Activated CD4-positive, alpha-beta memory T cell treated with anti-CD3 and anti-CD28 coated beads, Interleukin-2, amount 10 ng/mL, durations not matched to agents 7 days and 5 days (primary cell): ENCODE measurements at regions of chr10 and their contacts with region 1.

Region 1: GRCh38 chr10:8325024-8325980 is 270.8 kb downstream of the GATA3 start:
- DNase-seq: peak; percentile 35
- H3K4me3 Mint-ChIP-seq: peak overlapping the region; percentile 10
- H3K27ac Mint-ChIP-seq: peak overlapping the region; percentile 82
- H3K4me1 Mint-ChIP-seq: peaks cover 70% of the 10 kb centered on the region
- H3K27me3 Mint-ChIP-seq: no peaks in the 10 kb centered on the region

Region 2: DNA sequence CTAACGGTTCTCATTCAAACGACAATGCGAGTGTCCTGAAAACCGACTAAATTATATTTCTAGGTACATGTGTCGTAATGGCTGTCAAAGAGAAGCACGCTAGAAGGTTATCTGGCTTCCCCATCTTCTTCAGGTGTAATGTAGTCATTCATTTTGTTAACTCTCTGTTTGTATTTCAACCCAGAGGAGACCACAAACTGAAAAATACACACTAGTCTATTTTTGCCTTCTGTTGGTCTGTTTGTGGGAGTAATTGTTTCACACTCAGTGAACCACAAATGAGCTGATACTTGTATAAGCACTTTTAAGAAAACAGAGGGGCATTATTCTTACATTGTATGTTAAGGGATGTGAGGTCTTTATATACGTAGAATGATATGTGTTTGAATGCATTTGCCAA is 35.1 kb after region 1 on chr10:
- CTCF ChIA-PET with region 1: interaction called, 3 read pairs
- POLR2A ChIA-PET with region 1: interaction called, 10 read pairs
- DNase-seq: no peak
- H3K4me3 Mint-ChIP-seq: peak overlapping the region; percentile 28
- H3K27ac Mint-ChIP-seq: peak overlapping the region; percentile 88
- H3K4me1 Mint-ChIP-seq: peaks cover 72% of the 10 kb centered on the region
- H3K27me3 Mint-ChIP-seq: peaks cover 2% of the 10 kb centered on the region